Activated CD4-positive, alpha-beta T cell treated with anti-CD3 and anti-CD28 coated beads, Interleukin-2, amount 10 ng/mL, durations not matched to agents 24 days and 14 days (primary cell): ENCODE measurements at regions of chr14 and their contacts with region 1.

Region 1: GRCh38 chr14:65336191-65336591 is 76.3 kb upstream of the FUT8 start:
- DNase-seq: peak; percentile 88
- H3K4me3 Mint-ChIP-seq: peak overlapping the region; percentile 90
- H3K27ac Mint-ChIP-seq: peak overlapping the region; percentile 98
- H3K4me1 Mint-ChIP-seq: peaks cover 55% of the 10 kb centered on the region
- H3K27me3 Mint-ChIP-seq: no peaks in the 10 kb centered on the region

Region 2: DNA sequence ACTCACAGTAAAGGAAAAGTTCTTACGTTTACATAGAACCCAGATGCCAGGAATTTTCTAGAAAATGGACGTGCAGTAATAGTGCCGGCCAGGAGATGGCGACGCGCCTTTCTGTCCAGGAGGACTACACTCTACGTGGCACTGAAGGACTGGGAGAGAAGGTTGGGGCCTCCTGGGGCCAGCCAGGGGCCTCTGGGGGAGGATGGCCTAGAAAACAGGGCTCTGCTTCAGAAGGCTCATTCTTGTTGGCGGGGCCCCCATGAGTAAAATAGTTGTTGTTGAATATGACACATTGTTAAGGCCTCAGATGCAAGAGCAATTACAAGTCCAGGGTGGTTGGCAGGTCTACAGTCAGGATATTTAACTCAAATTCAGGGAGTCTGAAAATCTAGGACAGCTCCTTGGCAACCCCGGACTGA is 113.7 kb before region 1 on chr14:
- intact Hi-C with region 1: loop called (anchors 5 kb)
- DNase-seq: peak; percentile 86
- H3K4me3 Mint-ChIP-seq: no peak overlapping the region
- H3K27ac Mint-ChIP-seq: peak overlapping the region; percentile 2
- H3K4me1 Mint-ChIP-seq: peaks cover 45% of the 10 kb centered on the region
- H3K27me3 Mint-ChIP-seq: no peaks in the 10 kb centered on the region

Region 3: DNA sequence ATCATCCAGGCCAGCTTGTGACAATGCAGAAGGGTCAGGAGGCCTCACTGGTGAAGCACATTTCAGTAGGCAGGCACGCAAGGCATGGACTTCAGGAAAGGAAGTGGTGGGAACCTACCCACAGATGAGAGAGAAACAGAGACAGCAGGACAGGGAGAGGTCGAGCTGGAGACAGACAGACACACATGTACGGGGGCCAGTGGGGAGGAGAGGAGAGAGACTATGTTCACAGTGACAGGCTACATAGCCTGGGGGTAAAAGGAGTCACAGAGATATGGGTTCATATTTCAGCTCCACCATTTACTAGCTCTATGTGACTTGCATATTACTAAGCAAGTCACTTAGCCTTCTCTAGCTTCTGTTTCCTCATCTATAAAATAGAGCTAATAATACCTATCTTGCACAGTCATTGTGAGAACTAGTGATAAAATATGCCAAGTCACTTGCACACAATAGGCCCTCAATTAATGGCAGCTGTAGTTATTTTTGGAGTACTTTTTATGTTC is 14.8 kb before region 1 on chr14:
- intact Hi-C with region 1: loop called (anchors 2 kb)
- DNase-seq: peak; percentile 73
- H3K4me3 Mint-ChIP-seq: peak overlapping the region; percentile 30
- H3K27ac Mint-ChIP-seq: peak overlapping the region; percentile 81
- H3K4me1 Mint-ChIP-seq: peaks cover 48% of the 10 kb centered on the region
- H3K27me3 Mint-ChIP-seq: no peaks in the 10 kb centered on the region

Region 4: DNA sequence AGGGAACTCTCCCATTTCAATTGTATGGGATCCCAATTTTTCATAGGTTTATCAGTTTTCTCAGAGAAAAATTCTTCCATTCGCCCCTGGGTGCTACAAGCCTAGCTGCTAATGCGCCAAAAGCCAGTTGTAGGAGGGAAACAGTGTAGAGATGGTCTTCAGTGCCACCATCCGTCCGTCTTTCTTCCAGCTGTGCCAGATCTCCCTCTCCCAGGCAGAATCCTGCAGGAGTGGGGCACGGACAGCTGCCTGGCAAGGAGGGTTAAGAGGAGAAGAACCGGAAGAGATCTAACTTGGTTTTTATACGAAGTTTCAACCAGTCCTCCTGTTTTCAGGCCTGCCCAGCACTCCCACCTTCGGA is 37.5 kb after region 1 on chr14:
- intact Hi-C with region 1: loop called (anchors 5 kb)
- DNase-seq: no peak
- H3K4me3 Mint-ChIP-seq: no peak overlapping the region
- H3K27ac Mint-ChIP-seq: peak overlapping the region; percentile 70
- H3K4me1 Mint-ChIP-seq: peaks cover 43% of the 10 kb centered on the region
- H3K27me3 Mint-ChIP-seq: no peaks in the 10 kb centered on the region

Region 5: GRCh38 chr14:65462411-65462810 is 126.2 kb after region 1 on chr14:
- intact Hi-C with region 1: loop called (anchors 2 kb)
- DNase-seq: no peak
- H3K4me3 Mint-ChIP-seq: peak overlapping the region; percentile 12
- H3K27ac Mint-ChIP-seq: peak overlapping the region; percentile 68
- H3K4me1 Mint-ChIP-seq: peaks cover 38% of the 10 kb centered on the region
- H3K27me3 Mint-ChIP-seq: no peaks in the 10 kb centered on the region